ENCODE measurements at regions of chr1 and their contacts with region 1.

Region 1: DNA sequence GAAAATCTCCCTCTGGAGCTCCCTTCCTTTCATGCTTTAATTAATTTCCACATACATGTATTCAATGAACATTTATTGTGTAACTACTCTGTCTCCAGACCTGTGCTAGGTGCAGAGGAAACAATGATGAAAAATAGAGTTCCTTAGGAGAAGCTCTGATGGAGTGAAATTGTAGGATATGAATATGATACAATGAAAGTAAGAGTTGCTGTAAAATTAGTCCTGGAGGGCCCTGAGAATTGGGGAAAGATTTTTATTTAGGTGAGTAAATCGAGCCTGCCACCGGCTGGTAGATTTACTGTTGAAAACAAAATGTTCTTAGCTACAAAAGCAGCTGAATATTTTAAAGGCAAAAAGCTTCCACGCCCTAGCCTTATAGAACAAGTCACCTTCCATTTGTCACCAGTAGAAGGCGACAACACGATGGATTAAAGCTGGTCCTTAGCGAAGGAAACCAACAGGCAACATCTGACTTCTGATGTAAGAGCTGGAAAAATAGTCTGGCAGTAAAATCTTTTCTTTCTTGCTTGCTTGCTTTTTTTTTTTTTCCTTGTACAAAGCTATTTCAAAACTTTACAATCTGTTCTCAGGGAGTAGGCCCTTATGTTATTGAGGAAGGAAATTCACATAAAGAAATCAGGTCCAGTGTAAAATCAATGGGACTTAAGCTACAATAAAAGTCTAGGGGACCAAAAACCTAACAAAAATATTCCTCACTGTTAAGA is 82.0 kb upstream of the ROR1 start:
- DNase-seq: no peak
- ATAC-seq: peak; percentile 83 to 98 (median 88)
- H3K4me3 ChIP-seq: no peak overlapping the region
- H3K27ac ChIP-seq: no peak overlapping the region
- H3K4me1 ChIP-seq: peaks cover 5% of the 10 kb centered on the region
- H3K27me3 ChIP-seq: no peaks in the 10 kb centered on the region
- CTCF ChIP-seq: peak; percentile 79

Region 2: DNA sequence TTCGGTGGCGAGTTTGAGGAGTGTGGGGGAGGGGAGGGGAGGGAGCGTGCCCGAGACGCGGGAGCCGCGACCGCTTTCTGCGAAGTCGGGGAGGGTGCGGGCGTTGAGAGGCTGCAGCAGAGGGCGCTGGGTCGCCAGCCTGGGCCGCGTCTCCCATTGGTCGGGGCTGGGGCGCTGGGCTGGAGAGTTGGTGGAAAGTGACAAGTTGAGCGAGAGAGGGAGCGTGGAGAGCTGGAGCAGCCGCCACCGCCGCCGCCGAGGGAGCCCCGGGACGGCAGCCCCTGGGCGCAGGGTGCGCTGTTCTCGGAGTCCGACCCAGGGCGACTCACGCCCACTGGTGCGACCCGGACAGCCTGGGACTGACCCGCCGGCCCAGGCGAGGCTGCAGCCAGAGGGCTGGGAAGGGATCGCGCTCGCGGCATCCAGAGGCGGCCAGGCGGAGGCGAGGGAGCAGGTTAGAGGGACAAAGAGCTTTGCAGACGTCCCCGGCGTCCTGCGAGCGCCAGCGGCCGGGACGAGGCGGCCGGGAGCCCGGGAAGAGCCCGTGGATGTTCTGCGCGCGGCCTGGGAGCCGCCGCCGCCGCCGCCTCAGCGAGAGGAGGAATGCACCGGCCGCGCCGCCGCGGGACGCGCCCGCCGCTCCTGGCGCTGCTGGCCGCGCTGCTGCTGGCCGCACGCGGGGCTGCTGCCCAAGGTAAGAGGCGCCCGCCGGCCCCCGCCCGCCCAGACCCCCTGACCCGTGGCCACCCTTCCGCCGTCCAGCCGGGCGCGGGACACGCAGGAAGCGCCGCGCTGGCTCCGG is 82.2 kb after region 1 on chr1 and contains the start of gene ROR1:
- intact Hi-C with region 1: loop called in 1 of 2 experiments (anchors 5 kb)
- DNase-seq: peak; percentile 88 to 93
- ATAC-seq: peak; percentile 98 to 99 (median 98)
- H3K4me3 ChIP-seq: peak within 1 kb of the TSS; percentile 83
- H3K27ac ChIP-seq: peak within 1 kb of the TSS; percentile 87
- H3K4me1 ChIP-seq: peaks cover 15% of the 10 kb centered on the region
- H3K27me3 ChIP-seq: peaks cover 0 to 7% (median 0%) of the 10 kb centered on the region in 3 donors
- CTCF ChIP-seq: peak; percentile 61
- total RNA-seq, gene ROR1: 1.2 to 2.8 (median 2.0) TPM

Region 3: GRCh38 chr1:63917571-63918417 is 225.9 kb after region 1 on chr1:
- intact Hi-C with region 1: loop called in 1 of 2 experiments (anchors 10 kb)
- DNase-seq: no peak
- ATAC-seq: peak in 1 of 4 donors; percentile 36
- H3K4me3 ChIP-seq: no peak overlapping the region
- H3K27ac ChIP-seq: no peak overlapping the region
- H3K4me1 ChIP-seq: peaks cover 10% of the 10 kb centered on the region
- H3K27me3 ChIP-seq: no peaks in the 10 kb centered on the region
- CTCF ChIP-seq: no peak